GM23248 (cell line): ENCODE measurements at regions of chr14 and their contacts with region 1.

Region 1: GRCh38 chr14:34098045-34098984 is 147.4 kb upstream of the EGLN3 start:
- DNase-seq: peak; percentile 63
- H3K4me3 ChIP-seq: no peak overlapping the region
- H3K27ac ChIP-seq: no peak overlapping the region
- H3K4me1 ChIP-seq: no peaks in the 10 kb centered on the region
- H3K27me3 ChIP-seq: peaks cover 13% of the 10 kb centered on the region; the same call in 1 of the 2 replicates

Region 2: GRCh38 chr14:33839193-33840076 is 258.9 kb before region 1 on chr14:
- in situ Hi-C with region 1: loop called (anchors 25 kb)
- DNase-seq: peak; percentile 76
- H3K4me3 ChIP-seq: no peak overlapping the region
- H3K27ac ChIP-seq: no peak overlapping the region
- H3K4me1 ChIP-seq: no peaks in the 10 kb centered on the region
- H3K27me3 ChIP-seq: peaks cover 27% of the 10 kb centered on the region

Region 3: DNA sequence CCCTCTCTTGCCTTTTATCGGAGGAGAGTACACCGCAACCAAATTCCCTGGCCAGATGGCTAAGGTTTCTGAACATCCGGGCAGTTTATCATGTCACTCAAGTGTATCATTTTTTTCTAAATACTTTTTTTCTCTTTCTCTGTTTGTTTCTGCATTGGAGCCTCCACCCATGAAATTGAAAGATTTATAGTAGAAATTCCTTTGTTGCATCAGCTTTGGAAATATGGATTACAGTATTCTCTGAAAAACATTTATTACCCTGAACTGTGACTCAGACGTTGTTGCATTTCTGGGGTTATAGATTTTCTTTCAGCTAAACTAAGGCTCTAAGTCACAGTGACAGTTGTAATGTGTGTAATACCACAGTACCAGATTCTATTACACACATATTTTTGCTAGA is 176.8 kb after region 1 on chr14:
- in situ Hi-C with region 1: no loop called
- DNase-seq: peak; percentile 32
- H3K4me3 ChIP-seq: no peak overlapping the region
- H3K27ac ChIP-seq: no peak overlapping the region
- H3K4me1 ChIP-seq: peaks cover 9% of the 10 kb centered on the region
- H3K27me3 ChIP-seq: 0 out of 2 replicates have a peak, but pooled peaks cover under 1% of the 10 kb centered on the region